ENCODE measurements at regions of chr2 and their contacts with region 1.

Region 1: GRCh38 chr2:230781130-230781797 is 68.6 kb downstream of the CAB39 start:
- DNase-seq: peak in 7 of 9 donors; percentile 24 to 46 (median 33)
- ATAC-seq: peak; percentile 92
- H3K4me3 ChIP-seq: no peak overlapping the region
- H3K4me3 Mint-ChIP-seq: peak overlapping the region in 9 of 10 donors; percentile 4 to 70 (median 47)
- H3K27ac ChIP-seq: no peak overlapping the region
- H3K27ac Mint-ChIP-seq: peak overlapping the region; percentile 33 to 86 (median 66)
- H3K4me1 ChIP-seq: peaks cover 48 to 51% of the 10 kb centered on the region in 2 donors
- H3K4me1 Mint-ChIP-seq: peaks cover 64 to 87% (median 77%) of the 10 kb centered on the region in 7 donors
- H3K27me3 ChIP-seq: no peaks in the 10 kb centered on the region
- H3K27me3 Mint-ChIP-seq: no peaks in the 10 kb centered on the region

Region 2: DNA sequence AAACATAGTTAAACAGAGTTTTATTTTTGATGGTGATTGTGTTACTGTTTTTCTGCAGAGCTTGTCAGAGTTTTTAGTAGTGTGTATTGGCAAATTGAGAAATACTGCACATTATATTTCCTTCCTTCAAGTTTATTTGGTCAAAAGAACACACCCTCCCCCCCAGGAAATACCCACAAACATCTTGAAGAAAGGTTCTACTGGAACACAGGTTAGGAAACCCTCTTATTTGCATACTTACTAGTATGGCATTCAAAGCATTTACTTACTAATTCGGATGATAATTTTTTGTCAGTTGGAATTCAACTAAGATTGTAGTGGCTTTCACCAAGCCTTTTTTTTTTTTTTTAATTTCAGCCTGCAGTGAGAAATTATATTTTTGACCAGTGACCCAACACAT is 59.6 kb before region 1 on chr2:
- CTCF ChIA-PET with region 1: interaction called, 4 read pairs
- POLR2A ChIA-PET with region 1: interaction called, 6 read pairs
- intact Hi-C with region 1: loop called in 1 of 2 experiments (anchors 5 kb)
- DNase-seq: peak in 4 of 9 donors; percentile 8 to 25 (median 22)
- ATAC-seq: no peak
- H3K4me3 ChIP-seq: no peak overlapping the region
- H3K4me3 Mint-ChIP-seq: peak overlapping the region; percentile 38 to 85 (median 64)
- H3K27ac ChIP-seq: peak overlapping the region; percentile 55
- H3K27ac Mint-ChIP-seq: peak overlapping the region; percentile 4 to 94 (median 80)
- H3K4me1 ChIP-seq: peaks cover 76 to 80% of the 10 kb centered on the region in 2 donors
- H3K4me1 Mint-ChIP-seq: peaks cover 61 to 97% (median 87%) of the 10 kb centered on the region in 7 donors
- H3K27me3 ChIP-seq: no peaks in the 10 kb centered on the region
- H3K27me3 Mint-ChIP-seq: no peaks in the 10 kb centered on the region

Region 3: DNA sequence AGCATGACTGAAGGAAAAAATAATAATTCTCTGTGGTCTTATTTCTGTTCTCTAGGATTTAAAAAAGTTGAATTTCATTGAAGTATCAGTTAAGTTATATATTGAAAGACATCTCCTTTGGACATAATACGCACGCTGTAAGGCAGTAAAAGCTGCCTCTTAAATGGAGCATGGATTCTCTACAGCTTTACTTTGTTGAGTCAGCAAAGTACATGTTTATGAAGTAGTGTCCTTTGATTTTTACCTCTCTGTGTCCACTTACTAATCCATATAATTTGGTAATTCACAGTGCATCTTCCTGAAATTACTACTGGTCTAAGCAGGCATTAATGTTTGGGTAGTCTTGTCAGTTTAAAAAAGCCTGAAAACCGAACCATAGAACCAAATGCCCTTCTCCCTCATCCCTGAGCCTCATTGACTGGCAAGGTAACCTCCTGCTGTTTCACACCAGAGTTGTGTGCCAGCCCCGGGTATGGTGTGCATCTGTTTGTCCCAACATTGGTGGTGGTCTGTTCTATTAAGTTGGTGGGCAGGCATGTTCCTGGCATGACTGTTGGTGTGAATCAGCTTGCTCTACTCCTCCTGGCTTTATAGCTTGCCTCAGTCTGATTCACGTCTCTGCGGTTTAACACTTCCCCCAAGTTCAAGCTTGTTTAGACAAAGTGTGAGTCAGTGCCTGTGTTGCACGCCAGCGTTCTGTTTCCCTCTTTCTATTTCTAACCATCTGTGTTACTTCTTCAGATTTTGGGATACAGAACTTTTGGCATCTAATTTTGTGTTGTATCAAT is 12.5 kb after region 1 on chr2:
- CTCF ChIA-PET with region 1: interaction called, 5 read pairs
- POLR2A ChIA-PET with region 1: interaction called, 15 read pairs
- intact Hi-C with region 1: loop called (anchors 1 kb)
- DNase-seq: peak in 8 of 9 donors; percentile 33 to 70 (median 49)
- ATAC-seq: peak; percentile 95
- H3K4me3 ChIP-seq: peak overlapping the region; percentile 3
- H3K4me3 Mint-ChIP-seq: peak overlapping the region; percentile 22 to 82 (median 64)
- H3K27ac ChIP-seq: peak overlapping the region; percentile 39
- H3K27ac Mint-ChIP-seq: peak overlapping the region in 8 of 9 donors; percentile 82 to 94 (median 90)
- H3K4me1 ChIP-seq: peaks cover 34 to 47% of the 10 kb centered on the region in 2 donors
- H3K4me1 Mint-ChIP-seq: peaks cover 20 to 65% (median 55%) of the 10 kb centered on the region in 7 donors
- H3K27me3 ChIP-seq: no peaks in the 10 kb centered on the region
- H3K27me3 Mint-ChIP-seq: no peaks in the 10 kb centered on the region

Region 4: GRCh38 chr2:230807729-230808128 is 26.5 kb after region 1 on chr2:
- CTCF ChIA-PET with region 1: no interaction called
- POLR2A ChIA-PET with region 1: no interaction called
- intact Hi-C with region 1: no loop called
- DNase-seq: no peak
- ATAC-seq: no peak
- H3K4me3 ChIP-seq: no peak overlapping the region
- H3K4me3 Mint-ChIP-seq: no peak overlapping the region
- H3K27ac ChIP-seq: no peak overlapping the region
- H3K27ac Mint-ChIP-seq: peak overlapping the region in 8 of 9 donors; percentile 38 to 84 (median 57)
- H3K4me1 ChIP-seq: no peaks in the 10 kb centered on the region
- H3K4me1 Mint-ChIP-seq: peaks cover 0 to 36% (median 4%) of the 10 kb centered on the region in 7 donors
- H3K27me3 ChIP-seq: no peaks in the 10 kb centered on the region
- H3K27me3 Mint-ChIP-seq: no peaks in the 10 kb centered on the region